Activated T-helper 1 cell treated with anti-CD3 and anti-CD28 coated beads, Interleukin-12 subunit alpha, Interleukin-12 subunit beta, Interleukin-2, Interleukin-4 antibody, amounts not matched to agents 30 ng/mL and 10 ng/mL and 1 ng/mL, durations not matched to agents 14 hours and 24 hours and 36 hours (primary cell): ENCODE measurements at regions of chr11 and their contacts with region 1.

Region 1: GRCh38 chr11:17014838-17015626 is 818 bp upstream of the PLEKHA7 start:
- DNase-seq: no peak
- H3K4me3 Mint-ChIP-seq: peak overlapping the region; percentile 85
- H3K27ac Mint-ChIP-seq: peak overlapping the region; percentile 34
- H3K4me1 Mint-ChIP-seq: peaks cover 4% of the 10 kb centered on the region
- H3K27me3 Mint-ChIP-seq: peaks cover 36% of the 10 kb centered on the region

Region 2: DNA sequence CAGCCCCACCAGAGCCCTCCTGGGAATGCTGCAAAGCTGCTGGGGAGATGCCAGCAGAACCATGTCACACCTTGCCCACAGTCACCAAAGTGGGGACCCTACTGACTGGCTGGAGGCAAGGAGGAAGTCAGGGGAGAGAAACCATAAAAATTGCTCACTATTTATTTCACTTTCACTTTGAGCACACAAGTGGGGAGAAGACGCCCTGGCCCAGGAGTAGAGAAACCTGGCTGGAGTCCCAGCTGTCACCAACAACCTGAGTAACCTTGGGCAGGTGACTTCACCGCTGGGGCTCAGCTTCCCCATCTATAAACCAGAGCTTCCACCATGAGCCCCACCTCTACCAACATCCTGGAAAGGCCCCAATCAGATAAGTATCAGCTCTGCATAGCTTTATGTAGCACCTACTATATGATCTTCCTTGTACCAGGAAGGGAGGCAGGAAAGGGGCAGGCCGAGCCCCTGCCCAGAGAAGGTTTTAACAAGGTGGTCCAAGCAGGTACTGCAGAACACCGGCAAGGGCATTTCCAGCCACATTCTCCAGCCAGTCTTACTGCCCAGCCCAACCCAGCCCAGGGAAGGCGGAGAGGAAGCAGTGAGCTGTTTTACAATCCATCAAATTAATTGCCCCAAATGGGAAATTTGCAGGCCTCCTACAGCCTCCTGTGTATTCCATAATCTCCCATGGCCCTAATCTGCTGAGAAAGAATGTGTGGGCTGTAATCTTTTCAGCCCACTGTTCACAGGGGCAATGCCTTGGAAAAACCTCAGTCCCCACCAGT is 28.4 kb before region 1 on chr11:
- intact Hi-C with region 1: loop called (anchors 2 kb)
- DNase-seq: peak; percentile 37
- H3K4me3 Mint-ChIP-seq: no peak overlapping the region
- H3K27ac Mint-ChIP-seq: peak overlapping the region; percentile 8
- H3K4me1 Mint-ChIP-seq: peaks cover 29% of the 10 kb centered on the region
- H3K27me3 Mint-ChIP-seq: peaks cover 2% of the 10 kb centered on the region